ENCODE measurements at regions of chr15 and their contacts with region 1.

Region 1: GRCh38 chr15:57306161-57306943 is 70.0 kb upstream of the CGNL1 start:
- DNase-seq: peak; percentile 84 to 89 (median 88)
- ATAC-seq: peak; percentile 92
- H3K4me3 ChIP-seq: peak overlapping the region; percentile 0 to 37
- H3K27ac ChIP-seq: peak overlapping the region in 1 of 4 donors; percentile 6
- H3K4me1 ChIP-seq: peaks cover 15% of the 10 kb centered on the region
- H3K27me3 ChIP-seq: no peaks in the 10 kb centered on the region
- CTCF ChIP-seq: peak; percentile 81 to 90 (median 89)
- POLR2A ChIP-seq: no peak

Region 2: DNA sequence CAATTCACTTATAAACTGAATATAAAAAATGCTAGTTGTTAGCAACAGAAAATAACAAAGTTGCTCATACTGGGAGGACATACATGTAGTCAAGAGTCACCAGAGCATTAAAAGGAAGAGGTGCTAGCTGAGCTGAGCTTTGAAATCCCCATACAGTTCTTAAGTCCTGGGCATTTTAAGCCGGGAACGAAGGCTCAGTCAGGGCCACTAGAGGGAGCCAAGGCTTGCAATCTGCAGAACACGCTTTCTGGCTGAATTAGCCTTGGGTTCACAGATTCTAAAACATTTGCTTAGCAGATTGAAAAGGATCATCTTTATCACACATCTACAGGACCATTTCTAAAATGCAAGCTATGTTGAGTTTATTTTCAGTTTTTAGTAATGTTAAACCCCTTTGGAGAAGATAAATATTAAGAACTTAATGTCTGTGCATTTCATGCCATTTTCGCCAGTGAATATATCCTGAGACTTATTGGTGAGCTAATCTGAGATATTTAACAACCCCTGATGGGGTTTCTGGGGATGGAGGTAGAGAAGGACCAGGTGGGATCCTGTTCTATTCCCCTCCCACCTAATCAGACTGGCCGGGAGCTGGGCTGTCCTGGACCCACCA is 815.1 kb before region 1 on chr15:
- intact Hi-C with region 1: loop called (anchors 5 kb)
- DNase-seq: peak; percentile 69 to 79 (median 70)
- ATAC-seq: peak; percentile 69
- H3K4me3 ChIP-seq: no peak overlapping the region
- H3K27ac ChIP-seq: no peak overlapping the region
- H3K4me1 ChIP-seq: no peaks in the 10 kb centered on the region
- H3K27me3 ChIP-seq: no peaks in the 10 kb centered on the region
- CTCF ChIP-seq: peak; percentile 45 to 81 (median 73)
- POLR2A ChIP-seq: no peak

Region 3: DNA sequence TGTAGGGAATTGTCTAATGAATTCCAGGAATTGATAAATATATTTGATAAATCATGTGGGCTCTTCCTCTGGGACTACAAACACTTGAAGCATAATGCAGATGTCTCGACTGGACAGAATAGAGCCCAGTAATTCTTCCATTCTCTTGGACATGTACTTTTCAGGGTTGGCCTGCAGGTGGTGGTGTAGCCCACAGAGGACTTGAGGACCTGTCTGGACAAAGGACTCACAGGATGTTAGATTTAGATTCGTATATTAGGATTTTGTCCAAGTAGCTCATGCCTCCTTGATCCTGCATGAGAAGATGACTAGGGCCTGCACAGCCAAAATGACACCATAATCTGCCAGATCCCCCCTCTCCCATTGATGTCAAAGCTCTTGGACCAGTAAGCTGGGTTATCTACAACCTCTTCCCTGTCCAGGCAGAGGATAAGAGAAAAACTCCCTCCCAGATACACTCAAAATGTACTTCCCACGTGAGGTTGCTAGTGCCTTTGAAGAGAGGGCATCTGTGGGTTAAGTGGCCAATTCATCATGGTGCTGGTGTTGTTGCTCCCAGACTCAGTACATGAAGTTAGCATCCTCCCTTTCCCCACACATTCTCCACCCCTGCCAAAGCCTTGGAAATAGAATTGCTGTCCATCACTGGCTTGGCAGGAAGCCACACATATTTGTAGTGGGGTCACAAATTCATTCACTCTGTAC is 484.5 kb before region 1 on chr15:
- intact Hi-C with region 1: loop called (anchors 10 kb)
- DNase-seq: peak; percentile 63 to 73 (median 70)
- ATAC-seq: peak; percentile 86
- H3K4me3 ChIP-seq: no peak overlapping the region
- H3K27ac ChIP-seq: no peak overlapping the region
- H3K4me1 ChIP-seq: no peaks in the 10 kb centered on the region
- H3K27me3 ChIP-seq: no peaks in the 10 kb centered on the region
- CTCF ChIP-seq: peak; percentile 60 to 84 (median 81)
- POLR2A ChIP-seq: no peak

Measured in body of pancreas (tissue), 4 donors.